ENCODE measurements at regions of chr19 and their contacts with region 1.

Region 1: GRCh38 chr19:7149956-7150705 is 80.6 kb downstream of the ZNF557 start:
- DNase-seq: no peak
- CTCF ChIP-seq: no peak

Region 2: GRCh38 chr19:7101498-7102253 is 48.5 kb before region 1 on chr19:
- CTCF ChIA-PET with region 1: interaction called, 10 read pairs
- POLR2A ChIA-PET with region 1: no interaction called
- DNase-seq: no peak
- CTCF ChIP-seq: no peak

Region 3: DNA sequence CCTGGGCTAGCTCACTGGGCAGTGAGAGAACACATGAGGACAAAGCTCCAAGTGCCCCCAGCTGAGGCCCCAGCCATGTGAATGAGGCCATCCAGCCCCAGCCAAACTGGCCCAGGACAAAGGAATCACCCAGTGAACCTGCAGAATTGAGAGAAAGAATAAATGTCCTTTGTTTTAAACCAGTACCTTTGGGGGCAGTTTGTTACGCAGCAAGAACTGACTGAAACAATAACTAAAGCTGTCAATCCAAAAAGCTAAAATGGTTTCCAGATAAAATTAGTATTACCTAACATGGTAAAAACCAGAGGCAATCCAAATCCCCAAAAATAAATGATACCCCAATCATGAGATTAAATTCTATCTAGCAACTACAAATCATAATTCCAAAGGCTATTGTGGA is 11.0 kb before region 1 on chr19:
- CTCF ChIA-PET with region 1: interaction called, 10 read pairs
- POLR2A ChIA-PET with region 1: no interaction called
- DNase-seq: no peak
- CTCF ChIP-seq: no peak

Region 4: GRCh38 chr19:7242601-7243258 is 92.6 kb after region 1 on chr19:
- CTCF ChIA-PET with region 1: no interaction called
- POLR2A ChIA-PET with region 1: no interaction called
- DNase-seq: peak; percentile 58
- CTCF ChIP-seq: no peak

Region 5: DNA sequence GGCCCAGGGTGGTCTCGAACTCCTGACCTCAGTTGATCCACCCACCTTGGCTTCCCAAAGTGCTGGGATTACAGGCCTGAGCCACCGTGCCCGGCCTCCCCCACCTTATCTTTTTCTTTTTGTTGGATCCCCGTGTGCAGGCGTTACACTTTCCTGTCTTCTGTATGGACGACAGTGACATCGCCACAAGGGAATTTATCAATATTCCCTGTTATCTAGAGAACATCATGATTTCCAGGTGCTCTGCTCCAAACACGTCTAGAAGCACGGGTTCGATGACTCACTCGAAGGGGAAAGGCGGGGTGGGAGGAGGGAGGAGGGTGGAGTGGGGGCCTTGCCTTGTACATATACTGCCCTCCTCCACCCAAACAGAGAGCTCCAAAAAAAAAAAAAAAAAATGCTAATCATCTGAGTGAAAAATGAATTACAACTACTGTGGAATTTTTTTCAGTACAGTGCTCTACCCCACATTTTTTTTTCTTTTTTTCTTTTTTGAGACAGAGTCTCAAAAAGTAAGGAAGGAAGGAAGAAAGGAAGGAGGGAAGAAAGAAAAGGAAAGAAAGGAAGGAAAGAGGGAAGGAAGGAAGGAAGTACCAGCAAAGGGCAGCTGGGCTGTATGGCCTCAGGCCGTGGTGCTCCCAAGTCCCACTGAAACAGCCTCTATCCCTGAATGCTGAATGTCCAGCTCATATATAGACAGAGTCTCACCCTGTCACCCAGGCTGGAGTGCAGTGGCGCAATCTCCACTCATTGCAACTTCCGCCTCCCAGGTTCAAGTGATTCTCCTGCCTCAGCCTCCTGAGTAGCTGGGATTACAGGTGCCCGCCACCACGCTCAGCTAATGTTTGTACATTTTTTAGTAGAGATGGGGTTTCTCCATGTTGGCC is 107.3 kb after region 1 on chr19:
- CTCF ChIA-PET with region 1: no interaction called
- POLR2A ChIA-PET with region 1: no interaction called
- DNase-seq: no peak
- CTCF ChIP-seq: no peak

Region 6: DNA sequence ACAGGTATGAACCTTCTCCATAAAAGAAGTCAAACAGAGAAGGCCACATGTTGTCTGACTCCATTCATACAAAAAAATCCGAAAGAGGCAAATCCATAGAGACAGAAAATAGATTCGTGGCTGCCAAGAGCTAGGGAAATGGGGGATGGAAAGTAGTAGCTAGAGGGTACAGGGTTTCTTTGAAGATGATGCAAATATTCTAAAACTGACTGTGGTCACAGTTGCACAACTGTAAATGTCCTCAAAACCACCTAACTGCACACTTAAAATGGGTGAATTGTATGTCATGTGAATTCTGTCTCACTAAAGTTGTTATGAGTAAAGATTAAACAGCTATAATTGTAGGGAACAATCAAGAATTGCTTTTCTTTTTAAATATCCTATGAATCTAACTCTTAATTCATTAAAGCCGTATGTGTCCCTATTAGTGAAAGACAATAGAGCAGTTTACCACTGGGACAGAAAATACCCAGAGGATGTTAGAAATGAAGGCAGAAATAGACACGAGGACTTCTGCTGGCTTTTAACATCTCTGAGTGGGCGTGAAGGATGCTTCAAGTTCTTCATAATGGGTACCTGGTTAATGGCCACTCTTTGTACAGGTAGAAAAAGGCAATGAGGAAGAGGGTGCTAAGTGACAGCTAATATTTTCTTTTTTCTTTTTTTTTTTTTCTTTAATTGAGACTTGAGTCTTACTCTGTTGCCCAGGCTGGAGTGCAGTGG is 122.9 kb after region 1 on chr19:
- CTCF ChIA-PET with region 1: interaction called, 10 read pairs
- POLR2A ChIA-PET with region 1: no interaction called
- DNase-seq: peak; percentile 67
- CTCF ChIP-seq: no peak